HepG2 (cell line): ENCODE measurements at regions of chr11 and their contacts with region 1.

Region 1: GRCh38 chr11:107689317-107690202 is 22.3 kb downstream of the SLN start:
- DNase-seq: peak; percentile 57
- ATAC-seq: peak; percentile 98
- H3K4me3 ChIP-seq: no peak overlapping the region
- H3K27ac ChIP-seq: no peak overlapping the region
- H3K4me1 ChIP-seq: no peaks in the 10 kb centered on the region
- H3K27me3 ChIP-seq: no peaks in the 10 kb centered on the region
- CTCF ChIP-seq: peak; percentile 83
- EP300 ChIP-seq: no peak
- POLR2A ChIP-seq: no peak
- RAD21 ChIP-seq: peak; percentile 75

Region 2: GRCh38 chr11:107549253-107549953 is 140.2 kb before region 1 on chr11:
- CTCF ChIA-PET with region 1: interaction called, 18 read pairs
- POLR2A ChIA-PET with region 1: no interaction called
- in situ Hi-C with region 1: no loop called
- intact Hi-C with region 1: loop called (anchors 1 kb)
- DNase-seq: peak; percentile 29
- ATAC-seq: peak; percentile 54; the same call in 2 of the 3 replicates
- H3K4me3 ChIP-seq: no peak overlapping the region
- H3K27ac ChIP-seq: no peak overlapping the region
- H3K4me1 ChIP-seq: no peaks in the 10 kb centered on the region
- H3K27me3 ChIP-seq: no peaks in the 10 kb centered on the region
- CTCF ChIP-seq: peak; percentile 73
- EP300 ChIP-seq: no peak
- POLR2A ChIP-seq: no peak
- RAD21 ChIP-seq: no peak

Region 3: GRCh38 chr11:107573438-107573837 is 116.1 kb before region 1 on chr11:
- CTCF ChIA-PET with region 1: interaction called, 36 read pairs
- POLR2A ChIA-PET with region 1: no interaction called
- in situ Hi-C with region 1: loop called (anchors 5 kb)
- intact Hi-C with region 1: loop called (anchors 1 kb)
- DNase-seq: no peak
- ATAC-seq: no peak
- H3K4me3 ChIP-seq: no peak overlapping the region
- H3K27ac ChIP-seq: no peak overlapping the region
- H3K4me1 ChIP-seq: no peaks in the 10 kb centered on the region
- H3K27me3 ChIP-seq: peaks cover 0 to 10% of the 10 kb centered on the region in 2 experiments; a peak in 3 of 5 replicates
- CTCF ChIP-seq: no peak
- EP300 ChIP-seq: no peak
- POLR2A ChIP-seq: no peak
- RAD21 ChIP-seq: no peak